Gastrocnemius medialis (tissue), 4 donors: ENCODE measurements at regions of chr7 and their contacts with region 1.

Region 1: GRCh38 chr7:141701489-141702046 is 398 bp downstream of the DENND11 start:
- DNase-seq: peak in 1 of 2 donors; percentile 22
- ATAC-seq: peak; percentile 58 to 70
- H3K4me3 ChIP-seq: peak overlapping the region; percentile 66 to 90 (median 70)
- H3K27ac ChIP-seq: peak overlapping the region; percentile 78 to 84 (median 80)
- H3K4me1 ChIP-seq: peaks cover 18 to 24% of the 10 kb centered on the region in 2 donors
- H3K27me3 ChIP-seq: no peaks in the 10 kb centered on the region
- CTCF ChIP-seq: no peak
- POLR2A ChIP-seq: no peak

Region 2: GRCh38 chr7:141737834-141738591 is 36.4 kb after region 1 on chr7 and contains the start of gene SSBP1:
- in situ Hi-C with region 1: no loop called
- intact Hi-C with region 1: loop called (anchors 2 kb)
- DNase-seq: peak; percentile 85 to 88
- ATAC-seq: peak; percentile 98 to 99
- H3K4me3 ChIP-seq: peak within 1 kb of the TSS; percentile 74 to 97 (median 84)
- H3K27ac ChIP-seq: peak within 1 kb of the TSS; percentile 81 to 87 (median 84)
- H3K4me1 ChIP-seq: peaks cover 15 to 18% of the 10 kb centered on the region in 2 donors
- H3K27me3 ChIP-seq: no peaks in the 10 kb centered on the region
- CTCF ChIP-seq: peak; percentile 68 to 80 (median 76)
- POLR2A ChIP-seq: peak; percentile 57 to 67
- total RNA-seq, gene SSBP1: 127 to 147 (median 138) TPM